Ascending aorta (tissue), 2 donors: ENCODE measurements at regions of chr6 and their contacts with region 1.

Region 1: DNA sequence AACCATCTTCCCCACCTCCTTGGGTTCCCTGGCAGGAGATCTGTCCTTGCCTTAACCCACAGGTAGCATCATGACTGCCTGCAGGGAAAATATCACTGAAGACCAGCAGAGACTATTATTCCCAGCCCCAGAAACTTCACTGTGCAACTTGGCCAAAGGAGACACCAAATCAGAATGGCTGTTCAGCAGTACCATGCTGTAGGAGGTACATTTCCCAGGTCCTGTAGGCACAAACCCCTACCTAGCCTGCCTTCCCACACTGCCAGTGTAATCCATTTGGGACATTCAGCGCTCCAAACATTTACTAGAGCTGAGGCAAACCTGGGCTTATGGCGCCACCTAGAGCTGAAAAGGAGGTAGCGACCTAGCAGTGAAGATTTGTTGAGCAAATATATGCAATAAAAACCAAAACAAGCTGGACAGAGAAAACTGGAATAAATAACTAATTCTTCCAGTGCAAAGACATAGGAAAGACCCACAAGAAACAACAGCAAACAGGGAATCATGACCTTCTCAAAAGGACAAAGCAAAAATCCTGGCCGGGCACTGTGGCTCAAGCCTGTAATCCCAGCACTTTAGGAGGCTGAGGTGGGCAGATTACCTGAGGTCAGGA is 60.3 kb downstream of the VTA1 start:
- DNase-seq: peak in 1 of 2 donors; percentile 66
- H3K4me3 ChIP-seq: no peak overlapping the region
- H3K27ac ChIP-seq: no peak overlapping the region
- H3K4me1 ChIP-seq: no peaks in the 10 kb centered on the region
- H3K27me3 ChIP-seq: no peaks in the 10 kb centered on the region
- CTCF ChIP-seq: peak; percentile 44 to 66 (median 65)

Region 2: GRCh38 chr6:142146828-142147662 is 60.3 kb before region 1 on chr6 and contains the starts of genes NMBR and VTA1:
- intact Hi-C with region 1: loop called (anchors 1 kb)
- DNase-seq: peak; percentile 91 to 98
- H3K4me3 ChIP-seq: peak within 1 kb of the TSS; percentile 76 to 86
- H3K27ac ChIP-seq: peak within 1 kb of the TSS; percentile 59
- H3K4me1 ChIP-seq: peaks cover 0 to 14% of the 10 kb centered on the region in 2 donors
- H3K27me3 ChIP-seq: no peaks in the 10 kb centered on the region
- CTCF ChIP-seq: peak; percentile 85 to 90 (median 88)
- total RNA-seq, gene NMBR: not detected
- total RNA-seq, gene VTA1: 21.3 TPM